ENCODE measurements at regions of chr6 and their contacts with region 1.

Region 1: GRCh38 chr6:138662471-138662870 is 111.1 kb upstream of the CCDC28A start:
- DNase-seq: no peak
- ATAC-seq: no peak
- H3K4me3 ChIP-seq: no peak overlapping the region
- H3K27ac ChIP-seq: no peak overlapping the region
- H3K4me1 ChIP-seq: no peaks in the 10 kb centered on the region
- H3K27me3 ChIP-seq: peaks cover 0 to 3% of the 10 kb centered on the region in 2 experiments; a peak in 1 of 4 replicates
- CTCF ChIP-seq: no peak
- EP300 ChIP-seq: no peak
- POLR2A ChIP-seq: no peak
- RAD21 ChIP-seq: no peak

Region 2: DNA sequence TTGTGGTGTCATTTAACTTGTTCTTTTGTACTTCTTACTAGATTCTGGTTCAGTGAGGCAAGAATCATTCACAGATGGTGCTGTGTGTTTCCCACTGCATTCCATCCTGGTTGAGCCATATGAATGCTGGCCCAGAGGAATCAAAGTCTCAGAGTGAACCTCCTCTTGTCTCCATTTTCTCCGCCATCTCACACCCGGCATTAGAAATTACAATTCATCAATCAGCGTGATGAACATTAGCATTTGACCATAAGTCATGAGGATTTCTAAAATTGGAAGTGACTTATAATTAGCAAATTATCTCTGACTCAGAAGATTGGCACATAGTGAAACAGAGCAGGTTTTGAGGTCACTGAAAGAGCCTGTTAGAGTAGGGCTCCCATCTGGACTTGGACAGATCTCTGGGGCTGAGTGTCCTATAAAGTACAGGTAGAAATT is 770.2 kb before region 1 on chr6:
- CTCF ChIA-PET with region 1: no interaction called
- POLR2A ChIA-PET with region 1: no interaction called
- RAD21 ChIA-PET with region 1: no interaction called
- SMC1A ChIA-PET with region 1: no interaction called
- in situ Hi-C with region 1: no loop called
- intact Hi-C with region 1: loop called (anchors 5 kb)
- DNase-seq: no peak
- ATAC-seq: peak; percentile 91
- H3K4me3 ChIP-seq: no peak overlapping the region
- H3K27ac ChIP-seq: no peak overlapping the region
- H3K4me1 ChIP-seq: no peaks in the 10 kb centered on the region
- H3K27me3 ChIP-seq: no peaks in the 10 kb centered on the region
- CTCF ChIP-seq: no peak
- EP300 ChIP-seq: no peak
- POLR2A ChIP-seq: no peak
- RAD21 ChIP-seq: no peak

Region 3: GRCh38 chr6:138673346-138674014 is 11.0 kb after region 1 on chr6:
- CTCF ChIA-PET with region 1: interaction called, 13 read pairs
- POLR2A ChIA-PET with region 1: interaction called, 4 read pairs
- RAD21 ChIA-PET with region 1: interaction called, 5 read pairs
- SMC1A ChIA-PET with region 1: interaction called, 32 read pairs
- in situ Hi-C with region 1: no loop called
- intact Hi-C with region 1: no loop called
- DNase-seq: no peak
- ATAC-seq: no peak
- H3K4me3 ChIP-seq: no peak overlapping the region
- H3K27ac ChIP-seq: no peak overlapping the region
- H3K4me1 ChIP-seq: no peaks in the 10 kb centered on the region
- H3K27me3 ChIP-seq: no peaks in the 10 kb centered on the region
- CTCF ChIP-seq: no peak
- EP300 ChIP-seq: no peak
- POLR2A ChIP-seq: no peak
- RAD21 ChIP-seq: no peak